Activated CD4-positive, alpha-beta T cell treated with anti-CD3 and anti-CD28 coated beads for 36 hours (primary cell): ENCODE measurements at regions of chr22 and their contacts with region 1.

Region 1: GRCh38 chr22:31345331-31346254 is 553 bp downstream of the PATZ1 start:
- DNase-seq: peak; percentile 93
- ATAC-seq: peak; percentile 59
- H3K4me3 Mint-ChIP-seq: peak overlapping the region; percentile 90
- H3K27ac Mint-ChIP-seq: peak overlapping the region; percentile 92
- H3K4me1 Mint-ChIP-seq: peaks cover 44% of the 10 kb centered on the region
- H3K27me3 Mint-ChIP-seq: no peaks in the 10 kb centered on the region

Region 2: GRCh38 chr22:31160328-31160978 is 185.1 kb before region 1 on chr22:
- CTCF ChIA-PET with region 1: no interaction called
- POLR2A ChIA-PET with region 1: no interaction called
- intact Hi-C with region 1: loop called in 1 of 2 experiments (anchors 1 kb)
- DNase-seq: peak; percentile 47
- ATAC-seq: peak; percentile 45
- H3K4me3 Mint-ChIP-seq: peak overlapping the region; percentile 85
- H3K27ac Mint-ChIP-seq: peak overlapping the region; percentile 95
- H3K4me1 Mint-ChIP-seq: peaks cover 29% of the 10 kb centered on the region
- H3K27me3 Mint-ChIP-seq: no peaks in the 10 kb centered on the region

Region 3: GRCh38 chr22:31399211-31400028 is 53.8 kb after region 1 on chr22 and contains the start of gene DRG1:
- CTCF ChIA-PET with region 1: no interaction called
- POLR2A ChIA-PET with region 1: interaction called, 7 read pairs
- intact Hi-C with region 1: loop called (anchors 1 kb)
- DNase-seq: peak; percentile 99
- ATAC-seq: peak; percentile 98
- H3K4me3 Mint-ChIP-seq: peak within 1 kb of the TSS; percentile 99
- H3K27ac Mint-ChIP-seq: peak within 1 kb of the TSS; percentile 91
- H3K4me1 Mint-ChIP-seq: peaks cover 18% of the 10 kb centered on the region
- H3K27me3 Mint-ChIP-seq: peaks cover under 1% of the 10 kb centered on the region
- total RNA-seq, gene DRG1: 104 to 106 TPM

Region 4: GRCh38 chr22:31496007-31496734 is 150.6 kb after region 1 on chr22 and contains the start of gene SFI1:
- CTCF ChIA-PET with region 1: no interaction called
- POLR2A ChIA-PET with region 1: no interaction called
- intact Hi-C with region 1: loop called (anchors 1 to 2 kb)
- DNase-seq: peak; percentile 97
- ATAC-seq: peak; percentile 87
- H3K4me3 Mint-ChIP-seq: peak within 1 kb of the TSS; percentile 85
- H3K27ac Mint-ChIP-seq: peak within 1 kb of the TSS; percentile 93
- H3K4me1 Mint-ChIP-seq: peaks cover 55% of the 10 kb centered on the region
- H3K27me3 Mint-ChIP-seq: no peaks in the 10 kb centered on the region
- total RNA-seq, gene SFI1: 221 to 234 TPM